Motor neuron (in vitro differentiated cells): ENCODE measurements at regions of chr3 and their contacts with region 1.

Region 1: GRCh38 chr3:150913133-150913922 is 8.1 kb upstream of the MINDY4B start:
- ATAC-seq: peak; percentile 21 to 82 (median 62)
- H3K4me3 ChIP-seq: no peak overlapping the region
- H3K27ac ChIP-seq: no peak overlapping the region
- H3K4me1 ChIP-seq: peaks cover 5 to 8% of the 10 kb centered on the region in 2 donors

Region 2: GRCh38 chr3:151101270-151101969 is 188.1 kb after region 1 on chr3:
- in situ Hi-C with region 1: loop called in 1 of 9 experiments (anchors 25 kb)
- ATAC-seq: peak in 5 of 8 experiments; percentile 75 to 96 (median 95)
- H3K4me3 ChIP-seq: peak overlapping the region in 1 of 5 donors; percentile 2
- H3K27ac ChIP-seq: no peak overlapping the region
- H3K4me1 ChIP-seq: peaks cover 16 to 25% of the 10 kb centered on the region in 2 donors

Region 3: DNA sequence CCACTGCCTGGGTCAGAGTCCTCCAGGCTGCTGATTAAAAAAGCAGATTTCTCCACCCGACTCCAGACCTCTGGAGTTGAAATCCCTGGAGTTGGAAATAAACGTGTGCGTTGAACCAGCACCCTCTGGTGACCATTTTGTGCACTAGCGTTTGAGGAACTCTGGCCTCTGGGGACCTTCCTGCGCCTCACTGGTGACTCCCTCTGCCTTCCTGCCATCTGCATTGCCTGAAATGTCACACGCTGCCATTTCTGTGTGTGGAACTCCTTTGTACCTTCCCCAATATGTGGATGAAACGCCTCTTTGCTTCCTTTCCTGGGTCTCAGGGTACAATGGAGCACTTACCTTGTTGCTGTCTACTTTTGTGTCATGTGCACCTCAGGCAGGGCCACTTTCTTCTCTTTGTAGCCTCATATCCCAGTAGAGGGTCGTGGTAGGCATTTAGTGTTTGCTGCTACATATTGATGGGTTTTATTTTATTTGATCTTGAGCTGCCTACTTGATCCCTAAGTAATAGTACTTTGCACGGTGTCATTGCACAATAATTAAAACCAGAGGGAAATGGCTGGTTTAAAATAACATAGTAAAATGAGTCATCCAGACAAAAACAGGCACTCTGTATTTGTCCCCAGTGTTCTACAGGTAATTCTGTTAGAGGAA is 232.9 kb after region 1 on chr3:
- in situ Hi-C with region 1: loop called in 1 of 9 experiments (anchors 25 kb)
- ATAC-seq: peak; percentile 78 to 99 (median 96)
- H3K4me3 ChIP-seq: no peak overlapping the region
- H3K27ac ChIP-seq: no peak overlapping the region
- H3K4me1 ChIP-seq: peaks cover 8 to 19% of the 10 kb centered on the region in 2 donors

Region 4: DNA sequence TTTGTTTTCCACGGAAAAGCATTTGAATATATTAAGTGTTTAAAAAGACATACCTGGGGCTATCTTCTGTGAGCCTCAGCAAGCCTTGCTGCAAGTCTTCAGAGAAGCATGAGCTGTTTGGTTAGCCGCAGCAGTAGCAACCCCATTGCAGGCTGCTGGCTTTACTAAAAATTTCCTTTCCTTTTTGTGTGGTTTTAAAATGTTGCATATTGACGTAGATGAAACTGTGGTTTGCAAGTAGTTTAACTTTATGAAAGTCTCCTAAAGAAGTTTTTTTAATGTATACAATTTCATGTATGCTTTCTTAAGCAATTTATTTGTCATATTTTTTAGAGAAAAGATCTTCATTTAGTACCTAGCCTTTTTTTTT is 289.7 kb after region 1 on chr3 and contains the start of gene GPR171:
- in situ Hi-C with region 1: no loop called
- ATAC-seq: no peak
- H3K4me3 ChIP-seq: no peak within 1 kb of the TSS
- H3K27ac ChIP-seq: no peak within 1 kb of the TSS
- H3K4me1 ChIP-seq: no peaks in the 10 kb centered on the region
- total RNA-seq, gene GPR171: 0.92 to 4.9 (median 2.0) TPM